Activated CD4-positive, alpha-beta memory T cell treated with anti-CD3 and anti-CD28 coated beads for 36 hours (primary cell): ENCODE measurements at regions of chr1 and their contacts with region 1.

Region 1: DNA sequence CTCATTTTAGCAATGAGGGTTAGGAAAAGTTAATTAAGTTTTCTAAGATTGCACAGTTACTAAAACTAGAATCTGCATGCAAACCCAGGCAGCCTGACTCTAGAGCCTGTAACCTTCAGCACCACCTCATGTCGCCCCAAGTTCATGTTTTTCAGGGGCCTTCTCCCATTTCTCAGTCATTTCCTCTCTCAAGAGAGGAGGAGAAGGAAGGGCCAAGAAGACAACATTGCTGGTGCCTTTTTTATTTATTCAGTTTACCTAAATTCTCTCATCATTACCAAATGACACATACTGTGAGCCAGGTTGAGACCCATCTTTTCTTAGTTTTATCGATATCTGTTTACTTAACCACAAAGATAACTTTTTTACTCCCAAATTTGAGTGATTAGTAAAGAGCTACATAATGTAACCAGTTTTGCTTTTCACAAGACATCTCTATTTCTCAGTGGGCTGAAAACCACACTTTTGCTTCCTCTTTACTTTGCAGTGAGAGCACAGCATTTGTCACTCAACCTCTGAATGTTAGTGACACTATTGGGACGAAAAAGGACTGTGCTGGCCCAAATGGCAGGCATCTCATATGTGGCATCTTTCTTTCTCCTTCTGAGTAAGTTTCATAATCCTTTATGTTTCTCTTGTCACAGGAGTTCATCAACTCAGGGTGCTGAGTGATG is at the start of gene CD101:
- DNase-seq: peak; percentile 66
- H3K4me3 Mint-ChIP-seq: no peak within 1 kb of the TSS
- H3K27ac Mint-ChIP-seq: peak within 1 kb of the TSS; percentile 26
- H3K4me1 Mint-ChIP-seq: peaks cover 31% of the 10 kb centered on the region
- H3K27me3 Mint-ChIP-seq: no peaks in the 10 kb centered on the region
- total RNA-seq, gene CD101: 0.14 to 0.19 TPM

Region 2: DNA sequence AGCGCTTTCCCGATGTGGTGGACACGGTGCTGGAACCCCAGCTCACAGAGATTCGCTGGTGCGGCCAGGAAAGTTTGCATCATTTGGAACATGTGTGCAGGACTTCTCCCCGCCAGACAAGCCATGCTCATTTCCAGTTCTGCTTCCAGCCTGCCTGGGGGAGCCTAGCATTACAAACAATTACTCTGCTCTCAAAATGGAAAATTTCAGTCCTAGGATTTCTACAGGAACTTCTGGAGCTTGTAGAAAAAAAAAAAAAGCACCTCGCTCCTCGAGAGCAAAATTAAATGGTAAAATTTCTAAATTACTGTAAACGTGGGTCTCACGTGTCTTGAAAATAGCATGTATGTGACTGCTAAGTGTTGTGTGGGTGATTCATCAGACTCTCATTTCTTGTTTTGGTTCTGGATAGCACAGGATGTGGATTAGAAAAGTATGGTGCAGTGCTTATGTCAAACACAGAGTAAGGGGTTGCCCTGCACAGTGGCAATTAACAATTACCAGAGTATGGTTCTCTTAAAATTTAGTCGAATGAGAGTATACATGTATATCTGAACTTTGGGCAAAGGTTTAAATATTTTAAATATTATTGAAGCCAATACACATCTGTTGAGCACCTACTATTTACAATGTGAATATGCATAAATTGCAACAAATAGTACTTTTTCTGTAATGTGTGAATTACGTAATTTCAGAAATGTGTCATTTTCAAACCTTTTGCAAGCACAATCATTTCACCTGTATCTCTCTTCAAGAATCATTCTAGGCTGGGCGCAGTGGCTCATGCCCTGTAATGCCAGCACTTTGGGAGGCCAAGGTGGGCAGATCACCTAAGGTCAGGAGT is 153.5 kb before region 1 on chr1:
- CTCF ChIA-PET with region 1: no interaction called
- POLR2A ChIA-PET with region 1: no interaction called
- intact Hi-C with region 1: loop called (anchors 5 kb)
- DNase-seq: peak; percentile 61
- H3K4me3 Mint-ChIP-seq: no peak overlapping the region
- H3K27ac Mint-ChIP-seq: peak overlapping the region; percentile 34
- H3K4me1 Mint-ChIP-seq: peaks cover 27% of the 10 kb centered on the region
- H3K27me3 Mint-ChIP-seq: no peaks in the 10 kb centered on the region

Region 3: GRCh38 chr1:116934586-116935207 is 66.7 kb before region 1 on chr1:
- CTCF ChIA-PET with region 1: no interaction called
- POLR2A ChIA-PET with region 1: no interaction called
- intact Hi-C with region 1: loop called (anchors 2 kb)
- DNase-seq: no peak
- H3K4me3 Mint-ChIP-seq: no peak overlapping the region
- H3K27ac Mint-ChIP-seq: no peak overlapping the region
- H3K4me1 Mint-ChIP-seq: peaks cover 26% of the 10 kb centered on the region
- H3K27me3 Mint-ChIP-seq: no peaks in the 10 kb centered on the region

Region 4: DNA sequence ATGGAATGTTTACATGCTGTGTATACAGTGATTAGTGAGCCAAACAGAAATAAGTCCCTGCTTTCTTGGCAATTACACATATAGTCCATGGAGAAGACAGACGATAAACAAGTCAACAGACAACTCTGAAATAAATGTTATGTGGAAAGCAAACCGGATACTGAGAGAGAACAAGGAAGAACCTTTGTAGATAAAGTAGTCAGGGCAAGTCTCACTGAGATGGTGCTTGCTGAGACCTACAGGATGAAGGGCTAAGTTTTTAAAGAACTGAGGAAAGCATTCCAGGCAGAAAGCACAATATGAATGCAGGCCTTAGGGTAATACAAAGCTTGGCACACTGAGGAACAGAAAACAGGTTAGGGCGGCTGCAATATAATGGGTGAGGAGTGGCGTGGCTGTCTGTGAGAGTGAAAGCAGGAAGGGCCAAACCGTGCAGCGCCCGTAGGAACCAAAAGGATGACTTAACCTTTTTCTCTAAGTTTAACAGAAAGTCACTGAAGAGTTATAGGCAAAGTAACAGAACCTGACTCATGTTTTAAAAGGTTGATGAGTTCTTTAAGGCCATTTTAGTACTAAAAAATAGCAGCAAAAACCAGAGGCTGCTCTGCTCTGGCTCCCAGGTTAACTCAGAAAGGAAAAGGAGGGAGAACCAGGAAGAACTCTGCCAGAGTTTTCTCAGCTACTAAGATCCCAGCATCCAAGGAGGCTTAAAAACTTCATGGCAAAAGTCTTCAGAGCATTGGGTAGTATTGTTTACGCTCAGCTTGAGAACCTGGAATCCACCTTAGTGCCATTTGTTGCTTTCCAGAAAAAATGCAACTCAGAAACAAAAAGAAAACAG is 50.1 kb after region 1 on chr1:
- CTCF ChIA-PET with region 1: no interaction called
- POLR2A ChIA-PET with region 1: no interaction called
- intact Hi-C with region 1: loop called (anchors 1 kb)
- DNase-seq: peak; percentile 67
- H3K4me3 Mint-ChIP-seq: peak overlapping the region; percentile 55
- H3K27ac Mint-ChIP-seq: peak overlapping the region; percentile 26
- H3K4me1 Mint-ChIP-seq: peaks cover 30% of the 10 kb centered on the region
- H3K27me3 Mint-ChIP-seq: no peaks in the 10 kb centered on the region

Region 5: DNA sequence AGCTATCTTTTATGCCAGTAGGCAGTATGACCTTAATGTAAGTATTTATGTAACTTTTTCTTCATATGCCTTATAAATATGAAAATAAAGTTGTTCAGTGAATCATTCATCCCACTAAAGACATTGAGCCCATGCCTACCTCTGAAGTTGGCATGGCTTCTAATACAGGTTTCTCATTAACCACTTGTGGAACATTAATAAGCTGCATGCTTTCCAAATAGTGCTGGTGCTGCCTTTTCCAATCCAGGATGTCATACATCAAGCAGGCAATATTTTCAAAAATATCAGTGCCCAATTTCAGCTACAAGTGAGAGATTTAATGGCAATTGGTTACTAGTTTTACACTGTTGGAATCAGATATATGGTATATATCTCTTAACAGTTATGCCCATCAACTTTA is 1091.6 kb after region 1 on chr1:
- CTCF ChIA-PET with region 1: no interaction called
- POLR2A ChIA-PET with region 1: no interaction called
- intact Hi-C with region 1: no loop called
- DNase-seq: no peak
- H3K4me3 Mint-ChIP-seq: no peak overlapping the region
- H3K27ac Mint-ChIP-seq: no peak overlapping the region
- H3K4me1 Mint-ChIP-seq: no peaks in the 10 kb centered on the region
- H3K27me3 Mint-ChIP-seq: peaks cover 3% of the 10 kb centered on the region